Activated CD4-positive, alpha-beta T cell treated with anti-CD3 and anti-CD28 coated beads, Interleukin-2, amount 10 ng/mL, durations not matched to agents 7 days and 5 days (primary cell): ENCODE measurements at regions of chr10 and their contacts with region 1.

Region 1: DNA sequence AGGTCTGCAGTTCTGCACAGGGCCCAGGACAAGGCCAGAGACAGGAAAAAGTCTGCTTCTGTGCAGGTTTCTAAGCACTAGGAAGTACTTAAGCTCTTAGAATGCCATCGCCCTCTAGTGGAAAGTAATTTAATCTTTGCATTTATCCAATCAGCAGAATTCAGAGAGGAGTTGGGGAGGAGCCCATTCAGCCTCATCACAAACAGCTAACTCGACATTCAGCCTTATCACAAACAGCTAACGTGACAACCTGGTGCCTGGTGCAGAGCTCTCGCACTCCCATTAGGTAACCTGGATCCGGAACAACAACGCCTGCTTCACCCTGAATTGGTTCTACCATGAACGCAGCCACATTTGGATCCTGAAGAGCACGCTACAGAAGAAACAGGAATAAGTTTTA is 15.2 kb downstream of the OAT start:
- DNase-seq: peak; percentile 59
- H3K4me3 Mint-ChIP-seq: no peak overlapping the region
- H3K27ac Mint-ChIP-seq: peak overlapping the region; percentile 82
- H3K4me1 Mint-ChIP-seq: peaks cover 12% of the 10 kb centered on the region
- H3K27me3 Mint-ChIP-seq: no peaks in the 10 kb centered on the region

Region 2: DNA sequence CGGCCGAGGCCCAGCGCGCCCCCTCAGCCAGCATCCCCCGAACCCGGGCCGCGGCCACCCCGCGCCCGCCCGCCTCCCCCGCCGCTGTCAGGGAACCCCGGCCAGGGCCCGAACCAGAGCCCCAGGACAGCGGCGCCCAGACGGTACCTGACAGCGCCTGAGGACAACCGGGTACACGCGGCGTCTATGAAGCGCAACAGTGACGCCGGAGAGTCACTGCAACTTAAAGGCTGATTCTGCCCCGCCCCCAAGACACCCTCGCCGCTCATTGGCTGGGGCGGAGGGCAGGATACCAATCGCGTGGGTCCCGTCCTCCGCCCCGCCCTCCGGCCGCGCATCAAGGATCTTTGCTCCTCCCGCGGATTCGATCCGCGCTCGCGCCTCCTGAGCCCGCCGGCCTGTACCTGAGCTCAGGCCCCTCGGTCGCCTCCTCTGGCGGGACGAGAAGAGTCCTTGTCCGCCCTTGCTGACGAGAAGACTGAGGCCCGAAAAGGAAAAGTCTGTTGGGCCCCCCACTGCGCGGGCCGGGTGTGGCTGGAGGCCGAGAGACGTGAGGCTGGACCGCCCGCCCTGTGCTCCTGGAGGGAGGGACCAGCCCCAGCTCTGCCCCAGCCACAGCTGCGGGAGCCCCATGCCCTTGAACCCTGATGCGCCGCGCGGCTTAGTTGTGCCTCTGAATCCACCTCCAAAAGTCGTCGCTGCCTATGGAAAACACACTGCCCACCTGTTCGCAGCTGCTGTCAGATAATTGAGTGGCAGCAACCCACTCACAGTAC is 15.4 kb after region 1 on chr10 and contains the start of gene OAT:
- CTCF ChIA-PET with region 1: interaction called, 20 read pairs
- POLR2A ChIA-PET with region 1: no interaction called
- DNase-seq: peak; percentile 98
- H3K4me3 Mint-ChIP-seq: peak within 1 kb of the TSS; percentile 75
- H3K27ac Mint-ChIP-seq: peak within 1 kb of the TSS; percentile 83
- H3K4me1 Mint-ChIP-seq: peaks cover 15% of the 10 kb centered on the region
- H3K27me3 Mint-ChIP-seq: peaks cover 6% of the 10 kb centered on the region
- total RNA-seq, gene OAT: 30.2 to 35.4 TPM

Region 3: GRCh38 chr10:124601431-124602120 is 198.0 kb after region 1 on chr10:
- CTCF ChIA-PET with region 1: no interaction called
- POLR2A ChIA-PET with region 1: no interaction called
- DNase-seq: no peak
- H3K4me3 Mint-ChIP-seq: no peak overlapping the region
- H3K27ac Mint-ChIP-seq: no peak overlapping the region
- H3K4me1 Mint-ChIP-seq: no peaks in the 10 kb centered on the region
- H3K27me3 Mint-ChIP-seq: no peaks in the 10 kb centered on the region